SK-N-SH (cell line): ENCODE measurements at regions of chr3 and their contacts with region 1.

Region 1: DNA sequence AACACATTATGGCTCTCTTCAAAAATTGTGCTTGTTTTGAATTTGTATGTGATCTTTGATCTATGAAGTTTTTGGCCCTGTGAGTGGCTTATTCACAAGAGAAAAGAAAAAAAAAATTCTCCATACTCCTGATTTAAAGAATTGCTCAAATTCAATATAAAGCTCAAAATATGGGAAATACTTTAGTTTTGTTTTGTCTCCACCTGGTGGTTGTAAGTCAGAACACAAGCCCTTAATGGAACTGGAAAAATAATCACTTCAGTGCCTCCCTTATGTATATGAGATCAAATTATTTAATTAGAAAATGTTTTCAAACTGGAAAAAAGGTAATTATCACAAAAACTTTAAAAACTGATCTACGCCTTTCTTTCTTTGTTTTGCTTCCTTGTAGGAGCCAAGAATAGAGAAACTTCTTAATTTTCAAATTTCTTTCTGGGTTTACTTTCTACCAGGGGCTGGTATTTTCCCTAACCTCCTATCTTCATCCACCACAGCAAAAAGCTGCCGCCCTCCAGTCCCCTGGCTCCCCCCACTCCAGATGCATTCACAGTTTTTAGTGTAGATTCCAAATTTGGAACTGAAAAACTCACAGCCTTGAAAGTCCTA is 50.6 kb downstream of the SERP1 start:
- DNase-seq: peak; percentile 50
- H3K4me3 ChIP-seq: no peak overlapping the region
- H3K27ac ChIP-seq: no peak overlapping the region
- H3K4me1 ChIP-seq: peaks cover 0 to 6% of the 10 kb centered on the region in 2 experiments; a peak in 1 of 4 replicates
- H3K27me3 ChIP-seq: no peaks in the 10 kb centered on the region
- CTCF ChIP-seq: peak; percentile 83
- EP300 ChIP-seq: 0 out of 4 replicates have a peak, but pooled peaks of 1 of the 2 experiments have one; percentile 12
- RAD21 ChIP-seq: peak; percentile 86

Region 2: GRCh38 chr3:150183678-150184425 is 311.8 kb before region 1 on chr3:
- CTCF ChIA-PET with region 1: interaction called, 10 read pairs
- POLR2A ChIA-PET with region 1: no interaction called
- DNase-seq: peak; percentile 63
- H3K4me3 ChIP-seq: peak overlapping the region; percentile 42 to 44
- H3K27ac ChIP-seq: peak overlapping the region; percentile 62 to 73; a peak in 3 of 4 replicates
- H3K4me1 ChIP-seq: peaks cover 5 to 15% of the 10 kb centered on the region in 2 experiments; a peak in 2 of 4 replicates
- H3K27me3 ChIP-seq: no peaks in the 10 kb centered on the region
- CTCF ChIP-seq: peak; percentile 74
- EP300 ChIP-seq: no peak
- RAD21 ChIP-seq: peak; percentile 90

Region 3: DNA sequence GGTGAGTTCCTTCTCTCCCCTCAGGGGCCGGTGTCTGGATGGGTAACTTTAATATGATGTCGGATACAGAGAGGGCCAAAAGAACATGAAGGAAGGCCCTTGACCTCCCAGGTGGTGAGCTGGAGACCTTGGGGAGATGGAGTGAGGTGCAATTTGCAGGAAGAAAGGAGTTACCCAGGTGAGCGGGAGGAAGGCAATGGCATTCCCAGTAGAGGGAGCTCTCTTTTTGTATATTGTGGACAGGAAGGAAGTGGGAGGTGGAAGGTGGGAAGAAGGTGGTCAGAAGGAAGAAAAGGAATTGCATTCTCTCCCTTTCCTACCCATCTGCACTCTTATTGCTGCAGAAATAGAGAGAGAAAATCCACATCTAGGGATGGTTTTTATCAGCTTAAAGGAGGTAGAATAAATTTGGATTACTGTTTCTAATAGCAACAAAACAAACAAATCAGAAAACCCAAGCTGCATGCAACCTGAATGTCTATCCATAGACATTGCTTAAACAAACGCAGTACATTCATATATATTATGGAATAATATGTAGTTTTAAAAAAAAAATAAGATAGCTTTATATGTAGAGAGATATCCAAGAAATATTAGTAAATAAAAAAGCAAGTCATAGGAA is 256.6 kb before region 1 on chr3:
- CTCF ChIA-PET with region 1: interaction called, 27 read pairs
- POLR2A ChIA-PET with region 1: no interaction called
- DNase-seq: no peak
- H3K4me3 ChIP-seq: no peak overlapping the region
- H3K27ac ChIP-seq: no peak overlapping the region
- H3K4me1 ChIP-seq: peaks cover 17 to 30% of the 10 kb centered on the region in 2 experiments; a peak in 3 of 4 replicates
- H3K27me3 ChIP-seq: no peaks in the 10 kb centered on the region
- CTCF ChIP-seq: peak; percentile 17; the same call in 1 of the 2 replicates
- EP300 ChIP-seq: no peak
- RAD21 ChIP-seq: peak; percentile 56

Region 4: GRCh38 chr3:150293401-150294061 is 202.1 kb before region 1 on chr3:
- CTCF ChIA-PET with region 1: interaction called, 11 read pairs
- POLR2A ChIA-PET with region 1: no interaction called
- DNase-seq: no peak
- H3K4me3 ChIP-seq: no peak overlapping the region
- H3K27ac ChIP-seq: no peak overlapping the region
- H3K4me1 ChIP-seq: no peaks in the 10 kb centered on the region
- H3K27me3 ChIP-seq: no peaks in the 10 kb centered on the region
- CTCF ChIP-seq: no peak
- EP300 ChIP-seq: no peak
- RAD21 ChIP-seq: no peak

Region 5: DNA sequence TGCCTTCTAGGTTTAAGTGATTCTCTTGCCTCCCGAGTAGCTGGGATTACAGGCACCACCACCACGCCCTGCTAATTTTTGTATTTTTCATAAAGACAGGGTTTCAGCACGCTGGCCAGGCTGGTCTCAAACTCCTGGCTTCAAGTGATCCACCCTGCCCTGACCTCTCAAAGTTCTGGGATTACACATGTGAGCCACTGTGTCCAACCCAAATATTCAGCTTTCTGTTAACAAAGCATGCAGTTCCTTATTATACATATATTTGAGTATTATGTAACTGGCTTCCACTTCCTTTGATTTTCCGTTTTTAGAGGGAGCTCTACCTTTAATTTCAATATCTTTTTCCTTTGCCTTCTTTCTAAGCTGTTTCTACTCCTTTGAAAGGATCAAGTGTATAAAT is 61.4 kb before region 1 on chr3:
- CTCF ChIA-PET with region 1: interaction called, 10 read pairs
- POLR2A ChIA-PET with region 1: no interaction called
- DNase-seq: no peak
- H3K4me3 ChIP-seq: no peak overlapping the region
- H3K27ac ChIP-seq: no peak overlapping the region
- H3K4me1 ChIP-seq: peaks cover 0 to 2% of the 10 kb centered on the region in 2 experiments; a peak in 1 of 4 replicates
- H3K27me3 ChIP-seq: no peaks in the 10 kb centered on the region
- CTCF ChIP-seq: no peak
- EP300 ChIP-seq: no peak
- RAD21 ChIP-seq: no peak

Region 6: GRCh38 chr3:150483226-150483625 is 12.4 kb before region 1 on chr3:
- CTCF ChIA-PET with region 1: interaction called, 11 read pairs
- POLR2A ChIA-PET with region 1: no interaction called
- DNase-seq: no peak
- H3K4me3 ChIP-seq: no peak overlapping the region
- H3K27ac ChIP-seq: no peak overlapping the region
- H3K4me1 ChIP-seq: no peaks in the 10 kb centered on the region
- H3K27me3 ChIP-seq: no peaks in the 10 kb centered on the region
- CTCF ChIP-seq: no peak
- EP300 ChIP-seq: no peak
- RAD21 ChIP-seq: no peak

Region 7: DNA sequence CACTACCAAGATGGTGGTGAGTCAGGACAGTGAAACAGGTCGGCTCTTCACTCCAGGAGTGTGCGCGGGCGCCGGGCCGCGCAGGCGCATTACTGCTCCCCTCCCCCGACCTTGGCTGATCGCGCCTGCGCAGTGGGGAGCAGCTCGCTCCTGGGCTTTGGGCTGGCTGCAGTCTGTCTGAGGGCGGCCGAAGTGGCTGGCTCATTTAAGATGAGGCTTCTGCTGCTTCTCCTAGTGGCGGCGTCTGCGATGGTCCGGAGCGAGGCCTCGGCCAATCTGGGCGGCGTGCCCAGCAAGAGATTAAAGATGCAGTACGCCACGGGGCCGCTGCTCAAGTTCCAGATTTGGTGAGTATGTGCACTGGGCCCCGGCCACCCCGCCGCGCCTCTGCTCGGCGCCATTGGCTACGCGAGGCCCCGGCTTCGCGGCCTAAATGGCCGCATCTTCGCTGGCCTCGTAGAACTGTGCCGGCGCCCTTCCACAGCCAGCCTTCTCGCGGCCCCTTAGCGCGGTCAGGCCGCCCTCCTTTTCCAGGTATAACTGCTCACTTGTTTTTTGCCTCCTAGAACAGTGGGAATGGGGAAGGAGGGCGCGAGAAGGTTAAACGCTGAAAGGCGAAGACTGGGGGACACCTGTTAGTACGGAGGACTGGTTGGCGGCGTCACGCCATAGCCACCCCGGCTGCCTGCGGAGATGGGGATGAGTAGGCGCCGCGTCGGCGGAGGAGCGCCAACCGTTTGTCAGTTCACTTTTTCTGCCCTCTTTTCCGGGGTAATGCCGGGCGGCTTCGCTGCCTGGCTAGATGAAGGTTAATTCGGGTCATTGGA is 107.7 kb after region 1 on chr3 and contains the start of gene SELENOT:
- CTCF ChIA-PET with region 1: no interaction called
- POLR2A ChIA-PET with region 1: no interaction called
- DNase-seq: peak; percentile 97
- H3K4me3 ChIP-seq: peak within 1 kb of the TSS; percentile 80 to 85
- H3K27ac ChIP-seq: peak within 1 kb of the TSS; percentile 90 to 96
- H3K4me1 ChIP-seq: peaks cover 2 to 34% of the 10 kb centered on the region in 2 experiments
- H3K27me3 ChIP-seq: no peaks in the 10 kb centered on the region
- CTCF ChIP-seq: peak; percentile 46
- EP300 ChIP-seq: no peak
- RAD21 ChIP-seq: no peak
- polyA plus RNA-seq, gene SELENOT: 143 and 247 TPM in 2 replicates